Caco-2 (cell line): ENCODE measurements at regions of chr11 and their contacts with region 1.

Region 1: GRCh38 chr11:76634886-76635285 is 35.7 kb downstream of the LRRC32 start:
- DNase-seq: no peak
- H3K4me3 ChIP-seq: no peak overlapping the region
- H3K4me3 Mint-ChIP-seq: no peak overlapping the region
- H3K27ac Mint-ChIP-seq: no peak overlapping the region
- H3K4me1 ChIP-seq: no peaks in the 10 kb centered on the region
- H3K4me1 Mint-ChIP-seq: no peaks in the 10 kb centered on the region
- H3K27me3 ChIP-seq: peaks cover 3% of the 10 kb centered on the region
- H3K27me3 Mint-ChIP-seq: peaks cover 8% of the 10 kb centered on the region
- CTCF ChIP-seq: no peak

Region 2: DNA sequence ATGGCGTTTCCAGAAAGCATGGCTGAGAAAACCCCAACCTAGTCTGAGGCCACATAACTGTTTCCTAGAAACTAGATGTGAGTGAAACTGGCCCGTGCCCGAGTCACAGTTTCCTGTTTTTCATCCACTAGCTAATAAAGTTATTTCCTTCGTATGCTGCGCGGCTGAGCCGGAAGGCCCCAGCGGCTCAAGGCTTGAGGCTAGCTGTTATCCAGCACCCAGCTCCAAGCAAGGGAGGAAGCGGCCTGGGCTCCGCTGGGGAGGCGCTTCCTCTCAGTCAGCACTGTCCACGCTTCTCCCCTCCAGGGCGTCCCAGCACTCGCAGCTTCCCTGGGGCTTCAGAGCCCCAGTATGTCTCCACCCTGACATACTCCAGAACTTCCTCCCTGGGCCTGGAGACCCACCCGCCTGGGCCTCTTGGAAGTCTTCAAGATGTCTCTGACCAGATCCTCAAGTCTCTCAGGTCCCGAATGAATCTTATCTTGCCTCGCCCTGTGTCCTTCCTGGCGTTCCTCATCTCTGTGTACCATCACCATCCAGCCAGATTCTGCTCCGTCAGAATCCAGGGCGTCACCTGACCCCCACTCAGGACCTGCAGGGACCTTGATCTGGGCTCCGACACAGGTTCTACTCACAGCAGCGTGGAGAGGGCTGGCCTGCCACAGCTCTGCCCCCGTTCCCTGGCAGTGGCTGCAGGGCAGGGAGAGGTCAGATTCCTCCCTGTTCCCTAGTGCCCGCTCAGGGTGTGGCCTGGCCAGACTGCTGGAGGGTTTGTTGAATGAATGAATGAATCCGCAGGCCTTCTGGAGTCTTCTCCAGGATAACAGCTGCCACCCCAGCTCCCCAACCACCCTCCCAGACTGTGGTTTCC is 46.2 kb before region 1 on chr11:
- CTCF ChIA-PET with region 1: no interaction called
- POLR2A ChIA-PET with region 1: no interaction called
- intact Hi-C with region 1: no loop called
- DNase-seq: no peak
- H3K4me3 ChIP-seq: no peak overlapping the region
- H3K4me3 Mint-ChIP-seq: no peak overlapping the region
- H3K27ac Mint-ChIP-seq: no peak overlapping the region
- H3K4me1 ChIP-seq: no peaks in the 10 kb centered on the region
- H3K4me1 Mint-ChIP-seq: no peaks in the 10 kb centered on the region
- H3K27me3 ChIP-seq: no peaks in the 10 kb centered on the region
- H3K27me3 Mint-ChIP-seq: no peaks in the 10 kb centered on the region
- CTCF ChIP-seq: no peak

Region 3: GRCh38 chr11:76615950-76616349 is 18.9 kb before region 1 on chr11:
- CTCF ChIA-PET with region 1: no interaction called
- POLR2A ChIA-PET with region 1: no interaction called
- intact Hi-C with region 1: loop called (anchors 1 kb)
- DNase-seq: no peak
- H3K4me3 ChIP-seq: no peak overlapping the region
- H3K4me3 Mint-ChIP-seq: no peak overlapping the region
- H3K27ac Mint-ChIP-seq: no peak overlapping the region
- H3K4me1 ChIP-seq: no peaks in the 10 kb centered on the region
- H3K4me1 Mint-ChIP-seq: no peaks in the 10 kb centered on the region
- H3K27me3 ChIP-seq: no peaks in the 10 kb centered on the region
- H3K27me3 Mint-ChIP-seq: peaks cover 2% of the 10 kb centered on the region
- CTCF ChIP-seq: no peak